ENCODE measurements at regions of chr16 and their contacts with region 1.

Region 1: DNA sequence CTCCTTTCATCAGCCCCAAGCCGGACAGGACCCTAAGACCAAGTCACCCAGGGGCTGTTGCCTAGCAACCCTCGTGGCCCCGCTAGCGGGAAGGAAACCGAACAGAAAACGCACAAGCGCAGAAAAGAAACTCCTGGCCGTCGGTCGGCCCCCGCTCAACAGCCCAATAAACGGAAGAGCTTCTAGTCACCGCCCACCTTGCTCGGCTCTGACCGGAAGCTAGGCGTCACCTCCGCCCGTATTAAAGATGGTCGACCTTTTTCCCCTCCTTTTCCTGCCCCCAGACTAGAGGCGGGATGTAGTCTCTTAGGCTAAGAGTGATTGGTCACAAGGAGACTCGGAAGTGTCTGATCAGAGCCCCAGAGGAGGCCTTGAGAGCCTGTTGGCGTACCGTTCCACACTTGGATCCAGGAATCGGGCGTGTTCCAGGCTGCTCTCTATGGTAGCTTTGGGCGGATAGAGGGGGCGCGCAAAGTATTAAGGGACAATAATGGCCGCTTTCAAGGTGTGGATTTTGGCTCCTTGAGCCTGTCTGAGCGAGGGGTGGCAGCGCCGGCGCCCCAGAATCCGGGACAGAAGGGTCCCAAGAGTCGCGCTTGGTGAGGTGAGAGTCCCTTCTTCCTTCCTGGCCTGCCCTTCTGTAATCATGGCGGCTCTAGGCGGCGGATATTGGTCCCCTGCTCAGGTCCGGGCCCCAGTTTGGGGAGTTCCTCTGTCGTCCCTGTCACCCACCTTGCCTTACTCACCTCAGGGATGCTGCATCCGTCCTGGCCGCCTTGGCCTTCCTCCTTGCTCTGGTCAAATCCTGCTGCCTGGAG is at the starts of genes DHX38 and TXNL4B:
- DNase-seq: peak; percentile 98
- H3K4me3 Mint-ChIP-seq: peak within 1 kb of the TSS; percentile 97
- H3K27ac Mint-ChIP-seq: peak within 1 kb of the TSS; percentile 94
- H3K4me1 Mint-ChIP-seq: peaks cover 45% of the 10 kb centered on the region
- H3K27me3 Mint-ChIP-seq: no peaks in the 10 kb centered on the region
- total RNA-seq, gene DHX38: 91.0 and 98.1 TPM in 2 replicates
- total RNA-seq, gene TXNL4B: 23.4 and 23.7 TPM in 2 replicates

Region 2: DNA sequence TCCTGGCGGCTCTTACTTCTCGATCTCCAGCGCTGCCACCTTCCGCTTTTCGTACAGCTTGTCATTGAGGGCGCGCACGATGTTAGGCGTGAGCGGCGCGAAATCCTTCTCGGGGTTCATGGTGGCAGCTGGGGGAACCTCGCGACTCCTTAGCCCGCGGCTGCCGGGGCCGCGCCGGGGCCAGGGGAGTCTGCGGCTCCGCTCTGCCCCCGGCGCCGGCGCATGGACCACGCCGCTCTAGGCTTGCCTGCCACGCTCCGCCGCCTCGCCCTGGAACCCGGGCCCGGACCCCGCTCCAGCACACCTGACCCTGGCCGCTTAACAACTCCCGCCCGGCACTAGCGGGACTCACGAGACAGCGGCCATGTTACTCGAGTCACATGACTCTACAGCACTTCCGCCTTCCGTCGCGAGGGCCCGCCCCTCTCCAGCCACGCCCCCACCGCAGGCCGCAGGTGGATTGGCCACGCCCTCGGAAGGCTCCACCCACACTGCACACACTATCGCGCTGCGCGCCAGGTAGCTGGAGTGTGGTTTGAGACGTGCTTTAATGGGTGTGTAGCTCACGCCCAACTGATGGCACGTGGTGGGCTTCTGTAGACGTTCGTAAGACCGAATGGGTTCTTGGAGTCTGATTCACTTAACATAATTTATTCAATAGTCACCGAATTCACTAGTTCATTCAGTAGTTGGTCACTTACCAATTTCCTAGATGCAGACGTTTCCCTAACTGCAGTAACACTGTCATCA is 1292.7 kb before region 1 on chr16 and contains the start of gene VAC14:
- intact Hi-C with region 1: loop called (anchors 5 kb)
- DNase-seq: peak; percentile 99
- H3K4me3 Mint-ChIP-seq: peak within 1 kb of the TSS; percentile 96
- H3K27ac Mint-ChIP-seq: peak within 1 kb of the TSS; percentile 93
- H3K4me1 Mint-ChIP-seq: peaks cover 27% of the 10 kb centered on the region
- H3K27me3 Mint-ChIP-seq: no peaks in the 10 kb centered on the region
- total RNA-seq, gene VAC14: 36.3 and 38.6 TPM in 2 replicates

Region 3: DNA sequence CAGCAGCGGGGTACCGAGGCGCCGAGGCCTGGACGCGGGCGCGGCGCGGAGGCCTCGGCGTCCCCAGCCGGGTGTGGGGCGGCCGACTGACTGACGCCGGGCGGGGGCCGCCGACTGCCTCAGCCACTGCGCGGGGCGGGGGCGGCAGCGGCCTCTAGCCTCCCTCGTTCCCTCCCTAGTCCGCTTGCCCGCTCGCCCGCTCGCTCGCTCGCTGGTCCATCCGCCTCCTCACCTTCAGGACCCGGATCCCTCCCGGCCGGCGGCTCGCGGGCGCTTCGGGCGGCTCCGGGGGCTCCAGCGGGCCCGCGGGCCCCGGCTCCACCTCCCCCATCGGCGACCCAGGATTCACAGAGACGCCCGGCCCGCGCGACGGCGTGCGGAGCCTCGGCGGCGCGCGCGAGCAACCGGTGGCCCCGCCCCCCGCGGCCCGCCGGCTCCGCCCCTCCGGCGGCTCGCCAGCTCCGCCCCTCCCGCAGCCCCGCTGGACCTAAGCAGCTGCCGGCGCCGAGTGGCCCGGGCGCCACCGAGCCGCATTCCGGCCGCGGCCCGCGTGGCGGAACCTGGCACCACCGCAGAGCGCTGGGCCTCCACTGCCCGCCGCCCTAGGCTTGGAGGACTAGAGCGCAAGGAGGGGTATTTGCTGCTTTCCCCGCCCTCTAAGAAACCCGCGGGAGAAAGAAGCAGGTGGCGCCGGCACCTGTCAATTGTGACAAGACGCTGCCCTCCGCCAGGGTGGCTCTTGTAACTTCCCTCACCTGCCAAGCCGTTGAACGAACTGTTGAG is 369.9 kb before region 1 on chr16:
- intact Hi-C with region 1: loop called (anchors 10 kb)
- DNase-seq: peak; percentile 94
- H3K4me3 Mint-ChIP-seq: peak overlapping the region; percentile 79
- H3K27ac Mint-ChIP-seq: peak overlapping the region; percentile 53
- H3K4me1 Mint-ChIP-seq: peaks cover 13% of the 10 kb centered on the region
- H3K27me3 Mint-ChIP-seq: peaks cover 13% of the 10 kb centered on the region

Region 4: DNA sequence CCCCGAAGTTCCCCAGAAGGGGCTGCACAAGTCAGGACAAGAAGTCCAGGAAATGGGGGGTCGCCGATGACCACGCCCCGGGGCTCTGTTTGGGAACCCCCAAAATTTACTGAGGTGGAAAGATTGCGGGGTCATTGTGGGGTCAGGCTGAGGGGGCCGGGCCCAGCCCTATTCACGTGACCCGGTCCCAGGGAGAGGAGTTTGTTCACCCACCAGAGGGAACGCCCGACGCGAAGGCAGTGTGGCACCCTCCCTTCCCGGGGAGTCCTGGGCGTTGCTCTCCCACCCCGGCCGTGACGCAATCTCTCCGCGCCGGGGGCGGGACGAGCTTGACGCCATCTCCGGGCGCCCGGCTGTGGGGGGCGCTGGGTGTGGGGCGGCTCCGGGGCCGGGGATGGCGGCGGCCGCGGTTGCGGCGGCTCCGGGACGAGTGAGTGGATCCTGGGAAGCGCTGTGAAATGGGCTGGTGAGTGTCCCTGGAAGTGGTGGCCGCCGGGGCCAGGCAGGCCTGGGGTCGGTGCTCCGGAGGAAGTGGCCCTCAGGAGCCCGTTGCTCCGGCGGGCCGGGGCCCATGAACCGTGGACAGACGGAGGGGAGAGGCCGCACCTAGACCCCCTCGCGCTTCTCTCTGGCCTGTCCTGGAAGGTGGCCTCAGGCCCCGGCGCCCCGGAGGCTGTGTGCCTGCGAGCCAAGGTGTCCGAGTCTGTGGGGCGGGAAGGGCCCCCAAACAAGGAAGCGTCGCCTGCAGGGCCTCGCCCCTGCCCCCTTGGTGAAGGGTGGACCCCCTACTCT is 247.8 kb before region 1 on chr16 and contains the start of gene ATXN1L:
- intact Hi-C with region 1: loop called (anchors 1 kb)
- DNase-seq: peak; percentile 99
- H3K4me3 Mint-ChIP-seq: peak within 1 kb of the TSS; percentile 96
- H3K27ac Mint-ChIP-seq: peak within 1 kb of the TSS; percentile 97
- H3K4me1 Mint-ChIP-seq: peaks cover 45% of the 10 kb centered on the region
- H3K27me3 Mint-ChIP-seq: no peaks in the 10 kb centered on the region
- total RNA-seq, gene ATXN1L: 16.7 and 19.3 TPM in 2 replicates

Region 5: DNA sequence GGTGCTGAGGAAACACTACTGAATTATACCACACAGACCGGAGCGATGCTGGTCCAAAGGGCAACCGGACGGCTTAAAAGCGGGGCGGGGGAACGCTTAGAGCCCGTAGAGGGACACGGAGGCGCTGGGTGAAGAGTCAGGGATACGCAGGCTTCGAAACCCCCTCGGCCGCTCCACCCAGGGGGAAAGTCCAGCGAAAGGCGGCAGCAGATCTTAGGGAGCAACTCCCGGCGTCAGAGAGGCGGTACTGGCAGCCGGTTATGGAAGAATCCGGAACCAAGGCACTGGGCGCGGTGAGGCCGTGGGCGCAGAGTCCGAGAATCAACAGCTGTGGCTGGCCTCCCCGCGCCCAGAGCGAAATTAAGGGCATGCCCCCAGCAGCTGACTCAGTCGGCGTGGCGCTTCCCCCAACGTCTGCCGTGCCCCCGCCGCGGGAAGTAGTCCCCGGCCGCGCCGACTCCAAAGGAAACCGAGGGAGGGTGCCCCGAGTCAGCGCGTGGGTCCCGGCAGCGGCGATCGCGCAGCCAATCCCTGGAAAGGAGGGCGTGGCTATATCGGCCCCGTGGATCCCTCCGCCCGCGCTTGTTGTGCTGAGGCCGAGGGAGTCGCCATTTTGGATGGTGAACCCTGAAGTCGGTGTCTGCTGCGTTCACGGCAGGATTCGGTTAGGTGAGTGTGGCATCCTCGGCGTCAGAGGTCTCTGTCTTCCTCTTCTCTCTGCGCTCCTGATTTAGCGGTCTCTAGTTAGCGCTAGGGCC is 198.6 kb before region 1 on chr16 and contains the start of gene IST1:
- intact Hi-C with region 1: loop called (anchors 1 kb)
- DNase-seq: peak; percentile 99
- H3K4me3 Mint-ChIP-seq: peak within 1 kb of the TSS; percentile 95
- H3K27ac Mint-ChIP-seq: peak within 1 kb of the TSS; percentile 95
- H3K4me1 Mint-ChIP-seq: peaks cover 11% of the 10 kb centered on the region
- H3K27me3 Mint-ChIP-seq: peaks cover 1% of the 10 kb centered on the region
- total RNA-seq, gene IST1: 149 and 156 TPM in 2 replicates

Region 6: DNA sequence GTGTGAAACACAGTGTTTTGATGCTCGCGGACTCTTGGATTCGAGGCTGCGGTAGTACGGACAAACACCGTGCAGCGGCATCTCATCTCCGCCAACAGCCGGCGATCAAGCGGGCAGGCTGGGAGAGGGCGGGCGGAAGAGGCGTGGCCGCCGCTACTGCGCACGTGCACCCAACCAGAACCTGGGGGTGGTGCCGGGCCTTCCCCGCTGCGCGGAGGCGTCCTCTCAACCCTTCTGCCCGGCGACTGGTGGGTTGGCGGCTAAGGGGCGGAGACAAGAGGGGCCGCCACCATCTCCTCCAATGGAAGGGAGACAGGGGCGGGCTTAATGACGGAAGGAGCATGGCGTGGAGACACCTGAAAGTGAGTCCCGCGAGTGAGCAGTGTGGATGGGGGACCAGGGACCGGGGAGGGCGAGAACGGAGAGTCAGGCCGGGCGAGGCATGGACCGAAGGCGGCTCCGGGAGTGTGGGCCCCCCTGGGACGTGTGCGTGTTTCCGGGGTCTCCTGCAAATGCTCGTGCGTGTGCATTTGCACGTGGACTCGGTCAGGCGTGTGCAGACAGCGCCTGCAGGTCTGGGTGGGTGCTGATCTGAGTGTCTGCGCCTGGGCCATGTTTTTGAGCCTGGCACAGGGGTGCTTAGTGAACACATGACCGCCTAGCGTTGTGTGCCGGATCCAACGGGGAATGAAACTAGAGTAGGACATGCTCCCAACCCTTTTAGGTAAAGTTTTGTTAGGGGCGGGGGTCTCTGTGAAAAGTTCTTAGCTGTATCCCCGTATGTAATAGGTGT is 85.0 kb before region 1 on chr16 and contains the start of gene DHODH:
- intact Hi-C with region 1: loop called (anchors 1 kb)
- DNase-seq: peak; percentile 99
- H3K4me3 Mint-ChIP-seq: peak within 1 kb of the TSS; percentile 91
- H3K27ac Mint-ChIP-seq: peak within 1 kb of the TSS; percentile 93
- H3K4me1 Mint-ChIP-seq: peaks cover 22% of the 10 kb centered on the region
- H3K27me3 Mint-ChIP-seq: peaks cover 5% of the 10 kb centered on the region
- total RNA-seq, gene DHODH: 31.8 and 33.7 TPM in 2 replicates

Region 7: GRCh38 chr16:72664509-72665225 is 571.0 kb after region 1 on chr16:
- intact Hi-C with region 1: loop called (anchors 5 kb)
- DNase-seq: peak; percentile 98
- H3K4me3 Mint-ChIP-seq: peak overlapping the region; percentile 100
- H3K27ac Mint-ChIP-seq: peak overlapping the region; percentile 98
- H3K4me1 Mint-ChIP-seq: peaks cover 13% of the 10 kb centered on the region
- H3K27me3 Mint-ChIP-seq: peaks cover 4% of the 10 kb centered on the region

Measured in activated CD4-positive, alpha-beta T cell treated with anti-CD3 and anti-CD28 coated beads, Interleukin-2, amount 10 ng/mL, durations not matched to agents 24 days and 14 days (primary cell).